ENCODE measurements at regions of chr10 and their contacts with region 1.

Region 1: DNA sequence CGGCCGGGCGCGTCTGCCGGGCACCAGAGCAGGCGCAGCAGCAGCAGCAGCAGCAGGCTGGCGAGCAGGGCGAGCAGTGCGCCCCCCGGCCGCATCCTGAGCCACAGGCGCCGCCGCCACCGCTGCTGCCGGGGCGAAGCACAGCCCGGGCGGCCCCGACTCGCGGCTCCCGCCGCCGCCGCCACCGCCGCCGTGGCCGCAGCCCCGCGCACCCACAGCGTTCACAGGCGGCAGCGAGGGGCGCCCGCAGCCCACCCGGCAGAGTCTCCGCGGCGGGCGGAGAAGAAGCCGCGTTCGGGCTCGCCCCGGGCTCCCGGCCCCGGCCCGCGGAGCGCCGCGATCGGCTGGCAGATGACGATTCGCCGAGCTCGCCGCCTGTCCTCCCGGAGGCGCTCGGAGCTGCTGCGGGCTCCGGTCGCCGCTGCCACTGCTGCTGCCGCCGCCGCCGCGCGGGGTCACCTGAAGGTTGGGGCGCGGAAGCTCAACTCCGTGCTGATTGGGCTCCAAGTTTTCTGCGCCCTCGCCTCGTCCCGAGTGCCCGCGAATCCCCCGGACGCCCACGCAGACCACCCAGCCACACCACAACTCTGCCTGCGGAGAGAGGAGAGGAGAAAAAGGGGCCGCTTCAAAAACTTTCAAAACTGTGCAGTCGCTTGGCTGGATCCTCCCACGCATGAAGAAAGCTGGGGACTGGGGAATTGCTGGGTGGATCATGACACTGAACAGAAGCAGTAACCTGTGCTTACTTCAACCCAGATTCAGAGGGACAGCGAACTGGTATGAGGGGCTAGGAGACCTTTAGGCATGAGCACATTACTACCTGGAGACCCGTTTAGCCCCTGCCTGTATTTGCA is at the start of gene ST8SIA6:
- DNase-seq: peak; percentile 37 to 58
- ATAC-seq: peak; percentile 65 to 79
- H3K4me3 ChIP-seq: peak within 1 kb of the TSS; percentile 74
- H3K27ac ChIP-seq: peak within 1 kb of the TSS; percentile 53 to 85
- H3K4me1 ChIP-seq: no peaks in the 10 kb centered on the region
- CTCF ChIP-seq: no peak; the same call in 2 of the 3 replicates
- EP300 ChIP-seq: no peak
- POLR2A ChIP-seq: no peak
- RAD21 ChIP-seq: peak in 1 of 2 experiments; percentile 30; a peak in 2 of 5 replicates
- polyA plus RNA-seq, gene ST8SIA6: 0.16 and 0.17 TPM in 2 replicates

Region 2: GRCh38 chr10:17599089-17599488 is 144.7 kb after region 1 on chr10:
- CTCF ChIA-PET with region 1: interaction called, 13 read pairs
- POLR2A ChIA-PET with region 1: no interaction called
- DNase-seq: peak; percentile 35 to 40
- ATAC-seq: peak; percentile 77; a peak in 5 of 6 replicates
- H3K4me3 ChIP-seq: no peak overlapping the region
- H3K27ac ChIP-seq: no peak overlapping the region
- H3K4me1 ChIP-seq: no peaks in the 10 kb centered on the region
- CTCF ChIP-seq: peak; percentile 29; the same call in 2 of the 3 replicates
- EP300 ChIP-seq: no peak
- POLR2A ChIP-seq: no peak
- RAD21 ChIP-seq: peak; percentile 51 to 58; a peak in 4 of 5 replicates